Dendritic cell treated with granulocyte-macrophage colony-stimulating factor and Interleukin-4, amounts not matched to agents 40 ng/mL and 50 ng/mL, for 4 days (primary cell): ENCODE measurements at regions of chr6 and their contacts with region 1.

Region 1: GRCh38 chr6:119349323-119350042 is at the start of gene MAN1A1:
- H3K4me3 Mint-ChIP-seq: peak within 1 kb of the TSS; percentile 89
- H3K27ac Mint-ChIP-seq: peak within 1 kb of the TSS; percentile 90
- H3K4me1 Mint-ChIP-seq: peaks cover 44% of the 10 kb centered on the region
- H3K27me3 Mint-ChIP-seq: peaks cover 5% of the 10 kb centered on the region

Region 2: DNA sequence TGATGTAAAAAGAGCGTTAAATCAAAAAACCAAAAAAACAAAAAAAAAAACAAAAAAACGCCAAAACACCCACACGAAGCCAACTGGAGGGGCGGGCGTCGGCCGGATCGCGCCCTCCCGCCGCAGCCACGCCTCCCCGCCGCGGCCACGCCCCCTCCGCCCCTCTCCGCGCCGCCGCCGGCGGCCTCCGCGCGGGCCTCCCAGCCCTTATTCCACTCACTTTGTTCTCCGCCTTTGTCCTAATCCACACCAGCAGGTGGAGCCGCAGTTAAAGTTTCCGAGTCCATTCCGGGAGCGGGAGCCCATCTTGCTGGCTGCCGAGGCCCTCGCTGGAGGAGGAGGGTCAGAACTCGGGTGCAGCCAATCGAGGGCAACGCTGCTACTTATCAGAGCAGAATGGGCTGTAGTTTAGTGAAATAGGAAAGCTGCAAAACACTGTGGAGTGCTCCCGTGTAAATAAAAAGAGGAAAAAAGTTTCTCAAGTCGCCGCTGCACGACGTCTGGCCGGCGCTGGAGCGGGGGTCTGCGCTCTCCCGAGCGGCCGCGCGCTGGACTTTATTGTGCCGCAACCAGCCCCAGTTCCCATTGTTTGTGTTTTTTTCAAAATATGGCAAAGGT is 455.6 kb before region 1 on chr6 and contains the start of gene ASF1A:
- intact Hi-C with region 1: loop called (anchors 5 kb)
- H3K4me3 Mint-ChIP-seq: peak within 1 kb of the TSS; percentile 88
- H3K27ac Mint-ChIP-seq: peak within 1 kb of the TSS; percentile 96
- H3K4me1 Mint-ChIP-seq: peaks cover 45% of the 10 kb centered on the region
- H3K27me3 Mint-ChIP-seq: no peaks in the 10 kb centered on the region

Region 3: DNA sequence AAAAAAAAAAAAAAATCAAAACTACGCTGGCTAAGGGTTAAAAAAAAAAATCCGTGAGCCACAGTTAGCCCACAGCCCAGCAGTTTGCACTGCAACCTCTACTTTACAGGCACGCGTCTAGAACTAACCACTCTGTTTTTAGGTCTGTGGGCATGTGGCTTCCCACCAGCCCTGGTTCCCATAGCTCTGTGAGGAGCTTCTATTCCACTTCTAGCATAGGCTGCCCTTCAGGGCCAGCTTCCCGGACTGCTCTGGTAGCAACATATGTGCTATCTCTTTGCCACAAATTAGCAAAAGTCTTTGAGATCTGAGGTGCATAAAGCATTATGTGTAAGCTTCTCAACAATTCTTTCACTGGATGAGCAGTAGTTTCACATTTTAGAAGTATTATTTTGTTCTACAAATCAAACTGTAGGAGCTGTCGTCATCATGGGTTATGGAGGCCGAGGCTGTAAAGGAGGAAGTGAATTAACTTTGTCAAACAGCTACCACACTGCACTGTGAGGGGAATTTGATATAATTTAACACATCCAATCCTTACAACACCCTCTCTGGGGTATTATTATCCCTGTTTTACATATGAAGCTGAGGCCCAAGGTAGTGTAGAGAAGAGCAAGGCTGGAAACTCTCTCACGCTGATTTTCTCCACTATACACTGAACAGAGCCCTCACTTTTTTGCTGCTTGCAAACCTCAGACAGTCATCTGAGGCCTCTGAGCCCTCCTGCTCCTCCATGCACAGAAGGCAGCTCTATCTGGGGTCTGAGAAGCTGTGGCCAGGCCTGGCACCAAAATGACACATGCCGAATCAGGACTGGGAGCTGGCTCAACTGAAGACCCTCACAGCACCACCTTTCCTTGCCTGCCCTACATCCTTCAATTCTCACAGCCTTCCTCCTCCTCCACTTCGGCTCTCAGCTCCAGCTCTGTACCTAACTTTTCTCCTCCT is 35.3 kb before region 1 on chr6:
- intact Hi-C with region 1: loop called (anchors 5 kb)
- H3K4me3 Mint-ChIP-seq: no peak overlapping the region
- H3K27ac Mint-ChIP-seq: peak overlapping the region; percentile 64
- H3K4me1 Mint-ChIP-seq: peaks cover 50% of the 10 kb centered on the region
- H3K27me3 Mint-ChIP-seq: peaks cover 2% of the 10 kb centered on the region

Region 4: GRCh38 chr6:119552021-119552420 is 202.5 kb after region 1 on chr6:
- intact Hi-C with region 1: loop called (anchors 5 kb)
- H3K4me3 Mint-ChIP-seq: no peak overlapping the region
- H3K27ac Mint-ChIP-seq: peak overlapping the region; percentile 36
- H3K4me1 Mint-ChIP-seq: peaks cover 25% of the 10 kb centered on the region
- H3K27me3 Mint-ChIP-seq: no peaks in the 10 kb centered on the region

Region 5: GRCh38 chr6:119717942-119718341 is 368.5 kb after region 1 on chr6:
- intact Hi-C with region 1: loop called (anchors 10 kb)
- H3K4me3 Mint-ChIP-seq: no peak overlapping the region
- H3K27ac Mint-ChIP-seq: no peak overlapping the region
- H3K4me1 Mint-ChIP-seq: peaks cover 10% of the 10 kb centered on the region
- H3K27me3 Mint-ChIP-seq: no peaks in the 10 kb centered on the region